PC-9 (cell line): ENCODE measurements at regions of chr6 and their contacts with region 1.

Region 1: GRCh38 chr6:84066536-84066935 is 33.0 kb downstream of the MRAP2 start:
- DNase-seq: no peak
- H3K4me3 ChIP-seq: no peak overlapping the region
- H3K27ac ChIP-seq: no peak overlapping the region
- H3K4me1 ChIP-seq: no peaks in the 10 kb centered on the region
- H3K27me3 ChIP-seq: no peaks in the 10 kb centered on the region
- CTCF ChIP-seq: no peak

Region 2: GRCh38 chr6:83781506-83781905 is 285.0 kb before region 1 on chr6:
- CTCF ChIA-PET with region 1: no interaction called
- POLR2A ChIA-PET with region 1: no interaction called
- intact Hi-C with region 1: no loop called
- DNase-seq: no peak
- H3K4me3 ChIP-seq: no peak overlapping the region
- H3K27ac ChIP-seq: no peak overlapping the region
- H3K4me1 ChIP-seq: no peaks in the 10 kb centered on the region
- H3K27me3 ChIP-seq: no peaks in the 10 kb centered on the region
- CTCF ChIP-seq: no peak

Region 3: GRCh38 chr6:84081222-84081621 is 14.7 kb after region 1 on chr6:
- CTCF ChIA-PET with region 1: interaction called, 23 read pairs
- POLR2A ChIA-PET with region 1: no interaction called
- intact Hi-C with region 1: no loop called
- DNase-seq: no peak
- H3K4me3 ChIP-seq: no peak overlapping the region
- H3K27ac ChIP-seq: no peak overlapping the region
- H3K4me1 ChIP-seq: no peaks in the 10 kb centered on the region
- H3K27me3 ChIP-seq: no peaks in the 10 kb centered on the region
- CTCF ChIP-seq: no peak